GM13976 (cell line): ENCODE measurements at regions of chr2 and their contacts with region 1.

Region 1: GRCh38 chr2:176653479-176654443 is 384.5 kb downstream of the MTX2 start:
- DNase-seq: no peak
- CTCF ChIP-seq: no peak

Region 2: GRCh38 chr2:176976731-176977685 is 323.2 kb after region 1 on chr2:
- in situ Hi-C with region 1: no loop called
- DNase-seq: no peak
- CTCF ChIP-seq: no peak

Region 3: GRCh38 chr2:177148477-177149154 is 494.9 kb after region 1 on chr2:
- in situ Hi-C with region 1: loop called (anchors 10 kb)
- DNase-seq: peak; percentile 52
- CTCF ChIP-seq: peak; percentile 81